ENCODE measurements at regions of chr2 and their contacts with region 1.

Region 1: GRCh38 chr2:182655750-182656149 is 60.3 kb upstream of the DNAJC10 start:
- DNase-seq: no peak
- H3K4me3 Mint-ChIP-seq: no peak overlapping the region
- H3K27ac Mint-ChIP-seq: no peak overlapping the region
- H3K4me1 Mint-ChIP-seq: peaks cover 23% of the 10 kb centered on the region
- H3K27me3 Mint-ChIP-seq: peaks cover 13% of the 10 kb centered on the region

Region 2: GRCh38 chr2:182666674-182667314 is 11.0 kb after region 1 on chr2:
- CTCF ChIA-PET with region 1: interaction called, 14 read pairs
- POLR2A ChIA-PET with region 1: no interaction called
- DNase-seq: no peak
- H3K4me3 Mint-ChIP-seq: no peak overlapping the region
- H3K27ac Mint-ChIP-seq: no peak overlapping the region
- H3K4me1 Mint-ChIP-seq: no peaks in the 10 kb centered on the region
- H3K27me3 Mint-ChIP-seq: peaks cover 7% of the 10 kb centered on the region

Region 3: DNA sequence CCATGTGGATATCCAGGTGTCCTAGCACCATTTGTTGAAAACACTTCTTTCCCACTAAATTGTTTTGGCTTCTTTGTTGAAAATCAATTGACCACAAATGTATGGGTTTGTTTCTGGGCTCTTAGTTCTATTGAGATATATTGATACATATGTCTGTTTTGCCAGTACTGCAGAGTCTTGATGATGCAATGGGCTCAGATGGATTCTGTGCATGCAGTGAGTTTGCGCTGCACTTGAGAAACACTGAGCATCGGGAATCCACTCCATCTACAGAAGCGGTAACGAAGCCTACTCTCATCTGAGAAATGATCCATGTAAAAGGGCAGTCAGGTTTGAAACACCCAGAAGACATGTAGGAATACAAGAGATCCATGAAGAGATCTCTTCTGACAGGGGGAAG is 38.4 kb after region 1 on chr2:
- CTCF ChIA-PET with region 1: no interaction called
- POLR2A ChIA-PET with region 1: no interaction called
- DNase-seq: no peak
- H3K4me3 Mint-ChIP-seq: no peak overlapping the region
- H3K27ac Mint-ChIP-seq: no peak overlapping the region
- H3K4me1 Mint-ChIP-seq: no peaks in the 10 kb centered on the region
- H3K27me3 Mint-ChIP-seq: peaks cover 13% of the 10 kb centered on the region

Region 4: DNA sequence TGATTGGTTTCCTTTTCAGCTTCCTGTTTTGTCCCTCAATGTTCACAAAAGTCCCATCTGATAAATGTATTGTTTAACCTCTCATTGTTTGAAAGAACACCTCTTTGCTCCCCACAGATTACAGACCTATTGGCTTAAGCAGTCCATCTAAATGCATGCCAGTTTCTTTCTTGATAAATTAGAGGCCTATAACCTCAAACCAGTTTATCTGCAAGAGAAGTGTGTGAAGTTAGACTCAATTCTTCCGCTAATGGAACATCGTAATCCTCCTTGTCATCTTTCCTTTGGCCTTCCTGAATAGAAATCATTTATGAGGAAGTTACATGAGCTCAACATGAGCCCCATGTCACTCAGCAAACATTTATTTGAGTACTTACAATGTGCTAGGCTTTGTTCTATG is 136.7 kb after region 1 on chr2:
- CTCF ChIA-PET with region 1: no interaction called
- POLR2A ChIA-PET with region 1: no interaction called
- DNase-seq: no peak
- H3K4me3 Mint-ChIP-seq: no peak overlapping the region
- H3K27ac Mint-ChIP-seq: no peak overlapping the region
- H3K4me1 Mint-ChIP-seq: no peaks in the 10 kb centered on the region
- H3K27me3 Mint-ChIP-seq: peaks cover 10% of the 10 kb centered on the region

Measured in activated CD4-positive, alpha-beta memory T cell treated with anti-CD3 and anti-CD28 coated beads, Interleukin-2, amount 10 ng/mL, durations not matched to agents 7 days and 5 days (primary cell).